CD8-positive, alpha-beta T cell (primary cell): ENCODE measurements at regions of chr19 and their contacts with region 1.

Region 1: GRCh38 chr19:10403137-10404021 is at the start of gene CDC37:
- DNase-seq: peak; percentile 96 to 99 (median 98)
- ATAC-seq: peak; percentile 72
- H3K4me3 ChIP-seq: peak within 1 kb of the TSS; percentile 92 to 99
- H3K4me3 Mint-ChIP-seq: peak within 1 kb of the TSS; percentile 95
- H3K27ac ChIP-seq: peak within 1 kb of the TSS; percentile 93 to 95
- H3K27ac Mint-ChIP-seq: peak within 1 kb of the TSS; percentile 94
- H3K4me1 ChIP-seq: peaks cover 73% of the 10 kb centered on the region
- H3K4me1 Mint-ChIP-seq: peaks cover 67% of the 10 kb centered on the region
- H3K27me3 ChIP-seq: peaks cover 0 to 3% of the 10 kb centered on the region in 2 experiments
- H3K27me3 Mint-ChIP-seq: no peaks in the 10 kb centered on the region
- CTCF ChIP-seq: no peak
- total RNA-seq, gene CDC37: 195 to 196 TPM

Region 2: DNA sequence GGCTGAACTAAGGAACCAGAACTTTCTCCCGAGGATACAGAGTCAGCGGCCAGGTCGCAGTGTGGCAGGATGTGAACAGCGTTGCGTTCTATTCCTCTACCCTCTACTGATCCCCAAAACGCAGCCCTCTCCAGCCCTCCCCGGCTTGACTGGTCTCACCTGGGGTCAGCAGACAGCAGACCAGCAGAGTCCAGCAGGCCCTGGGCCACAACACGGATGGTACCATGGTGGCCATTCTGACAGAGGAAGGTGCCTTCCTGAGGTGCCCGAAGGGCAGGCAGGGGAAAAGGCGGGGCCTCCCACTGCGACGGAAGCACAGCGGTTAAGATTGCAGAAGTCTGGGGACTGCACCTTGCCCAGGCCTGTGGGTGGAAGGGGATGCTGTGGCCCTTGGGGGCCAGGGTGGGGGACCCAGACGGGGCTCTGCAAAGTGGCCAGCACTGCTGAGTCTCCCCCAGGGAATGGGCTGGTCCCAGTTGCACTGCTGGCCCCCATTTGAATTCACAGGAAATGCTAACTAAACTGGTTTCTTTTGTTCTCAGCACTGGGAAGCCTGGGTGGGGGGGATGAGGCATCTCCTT is 63.9 kb before region 1 on chr19 and contains the start of gene ICAM3:
- CTCF ChIA-PET with region 1: no interaction called
- POLR2A ChIA-PET with region 1: no interaction called
- intact Hi-C with region 1: no loop called
- DNase-seq: peak in 8 of 9 experiments; percentile 59 to 83 (median 61)
- ATAC-seq: peak; percentile 90
- H3K4me3 ChIP-seq: peak within 1 kb of the TSS; percentile 71 to 82
- H3K4me3 Mint-ChIP-seq: peak within 1 kb of the TSS; percentile 95
- H3K27ac ChIP-seq: peak within 1 kb of the TSS; percentile 64 to 70
- H3K27ac Mint-ChIP-seq: peak within 1 kb of the TSS; percentile 87
- H3K4me1 ChIP-seq: peaks cover 26% of the 10 kb centered on the region
- H3K4me1 Mint-ChIP-seq: peaks cover 26% of the 10 kb centered on the region
- H3K27me3 ChIP-seq: no peaks in the 10 kb centered on the region
- H3K27me3 Mint-ChIP-seq: no peaks in the 10 kb centered on the region
- CTCF ChIP-seq: no peak
- total RNA-seq, gene ICAM3: 134 to 140 TPM

Region 3: DNA sequence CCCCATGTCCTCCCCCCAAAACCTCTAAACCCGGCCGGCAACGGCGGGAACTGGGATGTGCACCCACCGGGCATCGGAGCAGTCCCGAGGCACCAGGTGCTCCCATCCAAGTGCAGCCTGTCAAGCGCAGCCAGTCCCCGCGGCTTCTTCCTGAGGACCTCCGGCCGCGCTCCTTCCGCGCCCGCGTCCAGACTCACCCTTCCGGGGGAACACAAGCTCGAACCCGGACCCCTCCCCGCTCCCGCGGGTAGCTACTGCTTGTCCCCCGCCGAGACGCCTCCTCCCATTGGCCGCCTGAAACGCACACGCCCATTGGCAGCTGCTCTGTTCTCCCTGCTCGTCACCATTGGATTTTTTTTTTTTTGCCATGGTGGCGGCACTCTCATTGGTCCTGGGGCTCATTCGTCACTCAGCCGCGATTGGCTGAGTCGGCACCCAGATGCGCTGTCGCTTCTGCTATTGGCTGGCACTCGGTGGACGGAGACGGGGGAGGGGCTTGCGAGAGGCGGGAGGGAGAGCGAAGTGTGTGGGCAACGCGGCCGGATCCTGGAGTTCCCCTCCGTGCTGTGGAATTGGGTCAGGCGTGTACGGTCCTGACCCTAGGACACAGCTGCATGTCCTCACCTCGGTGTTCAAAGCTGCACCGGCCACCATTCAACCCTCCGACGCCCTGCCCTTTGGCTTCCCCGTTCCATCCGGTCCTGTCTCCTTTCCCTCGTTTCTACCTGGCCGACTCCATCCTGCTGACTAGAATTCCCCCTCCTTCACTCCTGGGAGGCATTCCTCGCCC is 22.9 kb before region 1 on chr19 and contains the start of gene TYK2:
- CTCF ChIA-PET with region 1: interaction called, 3 read pairs
- POLR2A ChIA-PET with region 1: interaction called, 4 read pairs
- intact Hi-C with region 1: loop called in 1 of 2 experiments (anchors 2 kb)
- DNase-seq: peak; percentile 91 to 99 (median 96)
- ATAC-seq: peak; percentile 98
- H3K4me3 ChIP-seq: peak within 1 kb of the TSS; percentile 73 to 84
- H3K4me3 Mint-ChIP-seq: peak within 1 kb of the TSS; percentile 96
- H3K27ac ChIP-seq: peak within 1 kb of the TSS; percentile 76 to 88
- H3K27ac Mint-ChIP-seq: peak within 1 kb of the TSS; percentile 96
- H3K4me1 ChIP-seq: peaks cover 9% of the 10 kb centered on the region
- H3K4me1 Mint-ChIP-seq: peaks cover 22% of the 10 kb centered on the region
- H3K27me3 ChIP-seq: no peaks in the 10 kb centered on the region
- H3K27me3 Mint-ChIP-seq: no peaks in the 10 kb centered on the region
- CTCF ChIP-seq: no peak
- total RNA-seq, gene TYK2: 244 to 250 TPM

Region 4: DNA sequence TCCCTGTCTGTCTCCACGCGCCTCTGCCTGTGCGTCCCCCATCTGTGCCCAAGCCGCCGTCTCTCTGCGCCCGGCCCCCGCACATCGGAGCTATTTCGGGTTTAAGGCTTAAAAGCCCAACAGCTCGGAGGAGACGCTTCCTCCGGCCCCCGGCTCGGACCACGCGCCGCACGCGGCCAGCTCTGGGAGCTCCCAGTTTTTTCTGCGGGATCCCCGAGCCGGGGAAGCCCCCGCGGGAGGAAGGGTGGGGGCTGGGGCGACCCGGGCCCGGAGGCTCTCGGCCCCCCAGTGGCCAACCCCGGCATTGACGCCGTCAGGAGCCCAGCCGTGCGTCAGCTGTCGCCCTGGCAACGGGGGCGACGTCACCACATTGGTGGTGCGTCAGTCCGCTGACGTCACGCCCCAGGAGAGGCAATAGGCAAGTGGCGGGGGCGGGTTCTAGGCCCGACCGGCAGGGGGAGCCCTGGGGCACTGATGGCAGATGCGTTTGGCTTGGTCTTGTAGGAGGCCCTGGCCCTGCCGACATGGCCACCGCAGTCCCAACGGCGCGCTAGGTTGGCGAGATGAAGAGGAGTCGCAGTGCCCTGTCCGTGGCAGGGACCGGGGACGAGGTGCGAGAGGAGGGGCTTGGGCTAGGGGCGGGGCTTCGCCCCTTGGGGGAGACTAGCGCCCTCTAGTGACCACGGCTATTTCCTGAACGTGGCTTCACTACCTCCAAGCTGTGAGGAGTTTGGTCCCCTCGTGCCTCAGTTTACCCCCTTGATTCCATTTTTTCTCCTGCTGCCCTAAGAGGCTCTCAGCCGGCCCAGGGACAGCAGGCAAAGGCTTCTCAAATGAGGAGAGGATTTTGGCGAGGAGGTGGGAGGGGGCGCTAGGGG is 13.2 kb after region 1 on chr19:
- CTCF ChIA-PET with region 1: interaction called, 620 read pairs
- POLR2A ChIA-PET with region 1: interaction called, 48 read pairs
- intact Hi-C with region 1: loop called (anchors 1 kb)
- DNase-seq: peak; percentile 76 to 100 (median 98)
- ATAC-seq: peak; percentile 63
- H3K4me3 ChIP-seq: peak overlapping the region; percentile 57 to 63
- H3K4me3 Mint-ChIP-seq: peak overlapping the region; percentile 71
- H3K27ac ChIP-seq: peak overlapping the region; percentile 55 to 88
- H3K27ac Mint-ChIP-seq: peak overlapping the region; percentile 91
- H3K4me1 ChIP-seq: peaks cover 65% of the 10 kb centered on the region
- H3K4me1 Mint-ChIP-seq: peaks cover 54% of the 10 kb centered on the region
- H3K27me3 ChIP-seq: peaks cover 33 to 40% of the 10 kb centered on the region in 2 experiments
- H3K27me3 Mint-ChIP-seq: peaks cover 30% of the 10 kb centered on the region
- CTCF ChIP-seq: peak; percentile 100

Region 5: DNA sequence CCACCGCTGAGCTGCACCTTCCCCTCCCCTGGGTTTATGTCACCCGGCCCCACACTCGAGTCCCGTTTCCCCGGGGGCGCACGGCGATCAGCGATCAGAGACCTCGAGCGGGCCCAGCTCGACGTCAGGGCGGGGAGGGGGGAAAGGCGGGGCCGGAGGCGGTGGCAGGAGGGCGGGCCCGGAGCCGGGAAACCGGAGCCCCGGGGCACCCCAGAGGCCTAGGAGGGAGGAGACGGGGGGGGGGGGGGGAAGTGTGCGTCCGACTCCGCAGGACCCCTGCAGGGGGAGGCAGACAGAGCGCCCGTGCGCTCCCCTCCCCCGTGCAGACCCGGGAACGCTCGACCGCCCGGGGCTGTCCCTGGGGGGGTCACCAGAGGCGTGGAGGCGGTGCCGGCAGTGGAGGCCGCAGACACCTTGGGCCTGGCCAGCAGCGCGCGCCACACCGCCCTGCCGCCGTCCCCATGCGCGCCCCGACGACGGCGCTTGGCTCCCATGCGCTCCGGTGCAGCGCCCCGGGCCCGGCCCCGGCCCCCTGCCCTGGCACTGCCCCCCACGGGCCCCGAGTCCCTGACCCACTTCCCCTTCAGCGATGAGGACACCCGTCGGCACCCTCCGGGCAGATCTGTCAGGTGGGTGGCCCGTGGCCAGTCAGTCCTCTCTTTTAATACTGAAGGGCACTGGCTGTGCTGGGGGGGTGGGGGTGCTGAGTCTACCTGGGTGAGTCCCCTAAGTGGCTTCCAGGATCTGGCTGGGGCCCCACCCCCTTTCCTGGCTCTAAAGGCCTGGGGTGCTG is 28.8 kb after region 1 on chr19:
- CTCF ChIA-PET with region 1: interaction called, 620 read pairs
- POLR2A ChIA-PET with region 1: interaction called, 12 read pairs
- intact Hi-C with region 1: loop called (anchors 1 kb)
- DNase-seq: peak in 8 of 9 experiments; percentile 60 to 90 (median 78)
- ATAC-seq: peak; percentile 35
- H3K4me3 ChIP-seq: peak overlapping the region; percentile 44 to 52
- H3K4me3 Mint-ChIP-seq: peak overlapping the region; percentile 87
- H3K27ac ChIP-seq: peak overlapping the region; percentile 43 to 77
- H3K27ac Mint-ChIP-seq: peak overlapping the region; percentile 92
- H3K4me1 ChIP-seq: peaks cover 37% of the 10 kb centered on the region
- H3K4me1 Mint-ChIP-seq: peaks cover 50% of the 10 kb centered on the region
- H3K27me3 ChIP-seq: peaks cover 0 to 7% of the 10 kb centered on the region in 2 experiments
- H3K27me3 Mint-ChIP-seq: peaks cover 23% of the 10 kb centered on the region
- CTCF ChIP-seq: no peak

Region 6: GRCh38 chr19:10502524-10503001 is 99.2 kb after region 1 on chr19:
- CTCF ChIA-PET with region 1: no interaction called
- POLR2A ChIA-PET with region 1: no interaction called
- intact Hi-C with region 1: loop called in 1 of 2 experiments (anchors 10 kb)
- DNase-seq: peak; percentile 74 to 93 (median 87)
- ATAC-seq: peak; percentile 90
- H3K4me3 ChIP-seq: peak overlapping the region; percentile 83 to 96
- H3K4me3 Mint-ChIP-seq: peak overlapping the region; percentile 83
- H3K27ac ChIP-seq: peak overlapping the region; percentile 73 to 75
- H3K27ac Mint-ChIP-seq: peak overlapping the region; percentile 71
- H3K4me1 ChIP-seq: peaks cover 11% of the 10 kb centered on the region
- H3K4me1 Mint-ChIP-seq: peaks cover 31% of the 10 kb centered on the region
- H3K27me3 ChIP-seq: no peaks in the 10 kb centered on the region
- H3K27me3 Mint-ChIP-seq: no peaks in the 10 kb centered on the region
- CTCF ChIP-seq: no peak

Region 7: DNA sequence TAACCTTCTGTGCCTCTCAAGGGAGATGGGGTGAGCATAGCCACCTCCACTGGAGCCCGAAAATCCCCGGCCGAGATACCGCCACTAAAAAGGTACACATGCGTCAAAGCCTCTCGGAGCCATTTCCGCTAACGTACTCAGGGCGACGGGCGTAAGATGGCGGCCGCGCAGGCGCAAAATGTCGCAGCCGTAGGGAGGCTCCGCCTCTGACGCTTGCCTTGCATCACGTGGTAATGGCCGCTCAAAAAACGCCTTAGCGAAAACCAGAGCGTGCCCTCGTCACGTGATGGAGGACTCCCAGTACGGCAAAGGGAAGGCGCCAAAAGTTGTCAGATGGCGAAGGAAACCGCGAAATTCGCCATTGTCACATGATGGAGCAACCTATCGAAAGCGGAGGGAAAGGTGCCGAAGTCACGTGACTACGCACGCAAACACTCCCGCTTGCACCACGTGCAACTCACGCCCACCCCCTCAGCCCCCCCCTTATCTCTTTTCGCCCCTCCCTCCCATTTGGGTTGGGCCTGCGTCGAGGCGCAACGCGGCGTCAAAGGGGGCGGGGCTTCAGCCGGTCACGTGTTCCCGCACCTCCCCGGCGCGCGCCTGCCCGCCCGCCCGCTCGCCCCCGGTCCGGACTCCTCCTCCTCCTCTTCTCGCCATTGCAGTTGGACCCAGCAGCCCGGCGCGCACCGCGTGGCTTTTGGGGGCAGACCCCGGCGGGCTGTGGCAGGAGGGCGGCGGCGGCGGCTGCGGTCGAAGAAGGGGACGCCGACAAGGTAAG is 250.5 kb after region 1 on chr19 and contains the start of gene ILF3:
- CTCF ChIA-PET with region 1: no interaction called
- POLR2A ChIA-PET with region 1: no interaction called
- intact Hi-C with region 1: loop called (anchors 1 to 10 kb)
- DNase-seq: peak; percentile 100
- ATAC-seq: peak; percentile 77
- H3K4me3 ChIP-seq: peak within 1 kb of the TSS; percentile 83
- H3K4me3 Mint-ChIP-seq: peak within 1 kb of the TSS; percentile 94
- H3K27ac ChIP-seq: peak within 1 kb of the TSS; percentile 98 to 99
- H3K27ac Mint-ChIP-seq: peak within 1 kb of the TSS; percentile 98
- H3K4me1 ChIP-seq: peaks cover 41% of the 10 kb centered on the region
- H3K4me1 Mint-ChIP-seq: peaks cover 44% of the 10 kb centered on the region
- H3K27me3 ChIP-seq: no peaks in the 10 kb centered on the region
- H3K27me3 Mint-ChIP-seq: no peaks in the 10 kb centered on the region
- CTCF ChIP-seq: no peak
- total RNA-seq, gene ILF3: 604 to 613 TPM

Region 8: DNA sequence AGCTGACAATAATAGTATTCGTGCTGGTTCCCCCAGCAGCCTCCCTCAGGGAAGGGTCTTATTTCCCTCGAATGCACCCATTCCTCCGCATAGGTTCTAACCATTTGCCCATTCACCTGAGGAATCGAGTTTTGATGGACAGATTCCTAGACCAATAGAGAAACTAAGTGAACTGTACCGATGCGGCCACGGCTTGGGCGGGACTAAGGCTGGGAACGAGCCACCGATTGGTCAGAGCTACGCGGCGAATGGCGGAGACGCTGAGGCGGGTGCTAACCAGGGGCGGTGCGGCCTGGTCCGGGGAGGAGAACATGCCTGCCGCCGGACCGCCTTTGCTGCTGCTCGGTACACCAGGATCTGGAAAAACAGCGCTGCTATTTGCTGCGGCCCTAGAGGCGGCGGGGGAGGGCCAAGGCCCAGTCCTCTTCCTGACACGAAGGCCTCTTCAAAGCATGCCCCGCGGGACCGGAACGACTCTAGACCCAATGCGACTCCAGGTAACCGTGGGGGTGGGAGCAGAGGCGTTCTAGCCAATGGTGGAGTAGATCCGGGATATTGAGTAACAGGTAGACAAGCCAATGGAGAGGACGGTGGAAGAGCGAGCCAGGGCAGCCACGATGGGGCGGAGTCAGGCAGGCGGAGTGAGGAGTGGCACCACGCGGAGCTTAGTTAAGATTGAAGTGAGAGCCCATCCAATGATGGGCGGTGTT is 971.2 kb after region 1 on chr19 and contains the start of gene SWSAP1:
- CTCF ChIA-PET with region 1: no interaction called
- POLR2A ChIA-PET with region 1: no interaction called
- intact Hi-C with region 1: loop called in 1 of 2 experiments (anchors 10 kb)
- DNase-seq: peak; percentile 91 to 100 (median 96)
- ATAC-seq: peak; percentile 88
- H3K4me3 ChIP-seq: peak within 1 kb of the TSS; percentile 73 to 80
- H3K4me3 Mint-ChIP-seq: no peak within 1 kb of the TSS
- H3K27ac ChIP-seq: peak within 1 kb of the TSS; percentile 83 to 98
- H3K27ac Mint-ChIP-seq: no peak within 1 kb of the TSS
- H3K4me1 ChIP-seq: peaks cover 28% of the 10 kb centered on the region
- H3K4me1 Mint-ChIP-seq: peaks cover 20% of the 10 kb centered on the region
- H3K27me3 ChIP-seq: no peaks in the 10 kb centered on the region
- H3K27me3 Mint-ChIP-seq: no peaks in the 10 kb centered on the region
- CTCF ChIP-seq: no peak
- total RNA-seq, gene SWSAP1: 2.2 to 2.4 TPM